Psoas muscle (tissue), 8 donors: ENCODE measurements at regions of chr15 and their contacts with region 1.

Region 1: DNA sequence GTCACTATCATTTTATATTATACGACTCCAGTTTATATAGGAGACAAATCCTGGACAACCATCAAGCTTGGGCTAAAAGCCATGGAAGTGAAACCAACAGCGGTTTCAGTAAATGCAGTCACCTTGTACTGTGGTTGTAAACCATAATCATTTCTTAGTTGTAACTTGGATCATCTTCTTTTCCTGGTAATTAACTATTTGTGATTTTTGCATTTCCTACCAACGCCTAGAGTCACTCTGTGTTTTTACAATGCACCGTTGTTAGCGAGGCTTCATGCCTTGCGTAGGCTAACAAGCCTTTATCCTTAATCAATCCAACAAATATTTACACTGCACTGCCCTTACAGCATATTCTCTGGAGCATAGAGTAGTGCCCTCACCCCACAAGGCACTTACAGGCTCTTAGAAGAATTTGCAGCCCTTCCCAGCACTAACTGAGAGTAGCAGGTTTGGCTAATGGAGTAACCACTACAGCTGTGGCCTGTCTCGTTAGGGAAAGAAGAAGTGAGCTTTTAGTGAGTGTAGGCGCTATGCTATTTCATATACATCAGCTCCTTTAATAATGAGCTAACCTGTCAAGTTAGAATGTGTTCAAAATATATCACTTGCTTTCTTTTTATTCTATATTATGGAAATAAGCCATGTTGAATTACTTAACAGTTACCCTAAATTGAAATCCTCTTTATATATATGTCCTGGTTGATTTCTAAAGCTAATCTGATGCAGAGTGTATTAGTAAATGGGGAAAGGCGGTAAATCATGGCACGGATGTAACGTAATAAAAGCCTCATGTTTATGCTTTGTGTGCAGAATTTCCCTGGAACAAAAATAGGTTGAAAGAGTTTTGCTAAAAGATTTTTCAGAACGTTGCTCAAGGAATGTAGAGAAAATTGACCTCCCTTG is 62.8 kb downstream of the ABHD2 start:
- DNase-seq: no peak
- ATAC-seq: no peak
- H3K4me3 ChIP-seq: no peak overlapping the region
- H3K27ac ChIP-seq: peak overlapping the region; percentile 78
- H3K4me1 ChIP-seq: peaks cover 49% of the 10 kb centered on the region
- H3K27me3 ChIP-seq: no peaks in the 10 kb centered on the region
- CTCF ChIP-seq: no peak

Region 2: GRCh38 chr15:89105147-89105546 is 45.9 kb before region 1 on chr15:
- intact Hi-C with region 1: loop called in 1 of 2 experiments (anchors 5 kb)
- DNase-seq: no peak
- ATAC-seq: peak in 2 of 4 donors; percentile 24 to 40
- H3K4me3 ChIP-seq: no peak overlapping the region
- H3K27ac ChIP-seq: peak overlapping the region; percentile 87
- H3K4me1 ChIP-seq: peaks cover 87% of the 10 kb centered on the region
- H3K27me3 ChIP-seq: no peaks in the 10 kb centered on the region
- CTCF ChIP-seq: no peak